Activated naive CD4-positive, alpha-beta T cell treated with anti-CD3 and anti-CD28 coated beads for 36 hours (primary cell): ENCODE measurements at regions of chr17 and their contacts with region 1.

Region 1: DNA sequence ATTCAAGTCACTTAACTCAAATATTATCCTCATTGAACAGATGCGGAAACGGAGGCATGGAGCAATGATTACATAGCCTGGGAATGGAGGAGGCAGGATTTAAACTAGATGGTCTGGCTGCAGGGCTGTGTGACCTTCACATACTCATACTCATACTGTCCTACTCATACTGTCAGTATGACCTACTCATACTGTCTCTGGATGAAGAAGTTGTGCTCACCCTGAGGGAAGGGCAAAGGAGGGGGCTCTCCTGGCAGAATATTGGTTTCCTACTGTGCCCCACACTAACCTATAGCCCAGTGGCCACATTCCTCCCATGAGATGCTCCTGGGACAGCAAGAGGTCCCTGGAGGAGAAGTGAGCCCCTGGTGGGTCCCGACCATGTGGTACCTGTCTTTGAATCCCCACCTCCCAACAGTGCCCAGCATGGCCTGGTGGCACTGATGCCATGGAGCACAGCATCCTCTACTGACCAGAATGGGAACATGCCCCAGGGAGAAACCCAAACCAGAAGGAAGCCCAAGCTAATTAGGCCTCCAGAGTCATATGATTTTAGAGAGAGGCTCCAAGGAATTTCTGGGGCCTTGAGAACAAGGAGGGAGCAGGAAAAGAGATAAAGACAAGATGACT is 197.3 kb upstream of the SDK2 start:
- DNase-seq: peak; percentile 43
- H3K4me3 Mint-ChIP-seq: no peak overlapping the region
- H3K27ac Mint-ChIP-seq: no peak overlapping the region
- H3K4me1 Mint-ChIP-seq: peaks cover 10% of the 10 kb centered on the region
- H3K27me3 Mint-ChIP-seq: no peaks in the 10 kb centered on the region

Region 2: GRCh38 chr17:73657473-73658116 is 184.0 kb before region 1 on chr17:
- CTCF ChIA-PET with region 1: no interaction called
- intact Hi-C with region 1: loop called (anchors 1 kb)
- DNase-seq: peak; percentile 47
- H3K4me3 Mint-ChIP-seq: no peak overlapping the region
- H3K27ac Mint-ChIP-seq: peak overlapping the region; percentile 10
- H3K4me1 Mint-ChIP-seq: peaks cover 2% of the 10 kb centered on the region
- H3K27me3 Mint-ChIP-seq: no peaks in the 10 kb centered on the region